H1 (cell line): ENCODE measurements at regions of chr17 and their contacts with region 1.

Region 1: GRCh38 chr17:41579484-41580243 is 7.0 kb downstream of the KRT14 start:
- DNase-seq: peak; percentile 78 to 98
- H3K4me3 ChIP-seq: no peak overlapping the region
- H3K27ac ChIP-seq: no peak overlapping the region
- H3K4me1 ChIP-seq: peaks cover 0 to 4% (median 2%) of the 10 kb centered on the region in 4 experiments; a peak in 3 of 7 replicates
- H3K27me3 ChIP-seq: peaks cover 0 to 2% (median 0%) of the 10 kb centered on the region in 4 experiments; a peak in 1 of 7 replicates
- CTCF ChIP-seq: peak; percentile 85 to 99 (median 88)
- EP300 ChIP-seq: no peak
- POLR2A ChIP-seq: peak in 1 of 2 experiments; percentile 75; a peak in 2 of 3 replicates
- RAD21 ChIP-seq: peak; percentile 63 to 76

Region 2: GRCh38 chr17:41254861-41255260 is 324.8 kb before region 1 on chr17:
- CTCF ChIA-PET with region 1: no interaction called
- POLR2A ChIA-PET with region 1: no interaction called
- DNase-seq: no peak
- H3K4me3 ChIP-seq: no peak overlapping the region
- H3K27ac ChIP-seq: no peak overlapping the region
- H3K4me1 ChIP-seq: peaks cover 0 to 2% (median 0%) of the 10 kb centered on the region in 4 experiments; a peak in 2 of 7 replicates
- H3K27me3 ChIP-seq: no peaks in the 10 kb centered on the region; a peak in 1 of 7 replicates
- CTCF ChIP-seq: no peak
- EP300 ChIP-seq: no peak
- POLR2A ChIP-seq: no peak
- RAD21 ChIP-seq: no peak

Region 3: GRCh38 chr17:41567317-41567716 is 12.3 kb before region 1 on chr17:
- CTCF ChIA-PET with region 1: interaction called, 28 read pairs
- POLR2A ChIA-PET with region 1: interaction called, 11 read pairs
- DNase-seq: no peak
- H3K4me3 ChIP-seq: no peak overlapping the region
- H3K27ac ChIP-seq: no peak overlapping the region
- H3K4me1 ChIP-seq: no peaks in the 10 kb centered on the region
- H3K27me3 ChIP-seq: no peaks in the 10 kb centered on the region
- CTCF ChIP-seq: no peak
- EP300 ChIP-seq: no peak
- POLR2A ChIP-seq: no peak
- RAD21 ChIP-seq: no peak

Region 4: DNA sequence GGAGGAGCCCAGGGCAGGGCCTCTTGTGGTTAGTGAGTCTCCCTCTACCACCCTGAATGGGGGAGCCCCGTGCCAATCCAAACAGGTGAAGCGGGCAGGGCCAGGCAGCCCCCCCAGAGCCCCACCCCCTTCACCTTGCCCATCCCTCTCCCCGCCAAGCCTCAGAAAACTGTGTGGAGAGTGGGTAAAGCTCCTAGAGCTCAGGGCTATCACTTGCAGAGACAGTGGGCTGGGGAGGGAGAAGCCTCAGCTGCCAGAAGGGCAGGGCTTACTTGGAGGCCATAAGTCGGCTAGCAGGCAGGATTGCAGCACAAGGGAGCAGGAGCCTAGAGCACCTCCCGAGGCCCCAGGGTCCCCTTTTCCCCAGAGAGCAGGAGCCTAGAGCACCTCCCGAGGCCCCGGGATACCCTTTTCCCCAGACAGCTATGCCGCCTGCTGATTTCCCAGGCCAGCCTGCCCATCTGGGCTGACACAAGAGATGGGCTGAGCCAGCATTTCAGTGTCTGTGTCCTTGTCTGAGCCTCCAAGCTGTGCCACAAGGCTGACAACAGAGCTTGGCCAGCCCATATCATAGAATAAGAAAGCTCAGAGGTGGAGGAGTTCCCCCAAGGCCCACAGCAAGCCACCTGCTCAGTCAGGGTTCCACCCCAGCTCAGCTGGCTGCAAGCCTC is 13.8 kb after region 1 on chr17:
- CTCF ChIA-PET with region 1: interaction called, 17 read pairs
- POLR2A ChIA-PET with region 1: interaction called, 4 read pairs
- DNase-seq: no peak
- H3K4me3 ChIP-seq: no peak overlapping the region
- H3K27ac ChIP-seq: no peak overlapping the region
- H3K4me1 ChIP-seq: no peaks in the 10 kb centered on the region; a peak in 1 of 7 replicates
- H3K27me3 ChIP-seq: no peaks in the 10 kb centered on the region
- CTCF ChIP-seq: no peak
- EP300 ChIP-seq: no peak
- POLR2A ChIP-seq: no peak
- RAD21 ChIP-seq: no peak

Region 5: DNA sequence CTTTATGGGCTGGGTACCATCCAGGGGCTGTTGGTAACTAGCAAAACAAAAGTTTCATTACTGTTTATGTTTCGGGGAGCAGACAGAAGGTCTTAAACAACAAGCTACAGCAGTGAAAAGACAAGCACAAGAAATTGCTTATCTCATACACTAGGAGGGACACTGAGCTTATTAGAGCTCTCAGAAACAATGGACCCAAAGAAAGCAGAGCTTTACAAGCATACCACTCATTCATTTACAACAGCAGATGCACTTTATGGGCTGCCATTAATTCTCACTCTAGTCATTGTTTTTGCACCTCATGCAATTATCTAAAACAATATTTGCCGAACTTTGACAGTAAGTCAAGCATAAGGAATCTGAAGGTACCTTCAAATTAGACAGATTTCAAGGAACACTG is 22.9 kb after region 1 on chr17:
- CTCF ChIA-PET with region 1: interaction called, 16 read pairs
- POLR2A ChIA-PET with region 1: no interaction called
- DNase-seq: no peak
- H3K4me3 ChIP-seq: no peak overlapping the region
- H3K27ac ChIP-seq: no peak overlapping the region
- H3K4me1 ChIP-seq: no peaks in the 10 kb centered on the region
- H3K27me3 ChIP-seq: no peaks in the 10 kb centered on the region
- CTCF ChIP-seq: no peak
- EP300 ChIP-seq: no peak
- POLR2A ChIP-seq: no peak
- RAD21 ChIP-seq: no peak

Region 6: GRCh38 chr17:41615454-41615853 is 35.8 kb after region 1 on chr17:
- CTCF ChIA-PET with region 1: interaction called, 17 read pairs
- POLR2A ChIA-PET with region 1: no interaction called
- DNase-seq: peak in 1 of 2 experiments; percentile 31
- H3K4me3 ChIP-seq: no peak overlapping the region
- H3K27ac ChIP-seq: no peak overlapping the region
- H3K4me1 ChIP-seq: peaks cover 0 to 4% (median 2%) of the 10 kb centered on the region in 4 experiments; a peak in 4 of 7 replicates
- H3K27me3 ChIP-seq: no peaks in the 10 kb centered on the region
- CTCF ChIP-seq: peak in 1 of 3 experiments; percentile 14; a peak in 2 of 4 replicates
- EP300 ChIP-seq: no peak
- POLR2A ChIP-seq: no peak
- RAD21 ChIP-seq: peak; percentile 13 to 29; a peak in 3 of 4 replicates

Region 7: GRCh38 chr17:41724476-41725050 is 144.9 kb after region 1 on chr17:
- CTCF ChIA-PET with region 1: no interaction called
- POLR2A ChIA-PET with region 1: no interaction called
- DNase-seq: no peak
- H3K4me3 ChIP-seq: no peak overlapping the region
- H3K27ac ChIP-seq: no peak overlapping the region
- H3K4me1 ChIP-seq: peaks cover 0 to 2% (median 0%) of the 10 kb centered on the region in 4 experiments; a peak in 3 of 7 replicates
- H3K27me3 ChIP-seq: no peaks in the 10 kb centered on the region
- CTCF ChIP-seq: no peak
- EP300 ChIP-seq: no peak
- POLR2A ChIP-seq: no peak
- RAD21 ChIP-seq: no peak